Calu3 (cell line): ENCODE measurements at regions of chr18 and their contacts with region 1.

Region 1: GRCh38 chr18:63949068-63949737 is at the start of gene HMSD:
- DNase-seq: peak; percentile 91
- H3K4me3 Mint-ChIP-seq: peak within 1 kb of the TSS; percentile 100
- H3K27ac Mint-ChIP-seq: peak within 1 kb of the TSS; percentile 95
- H3K4me1 Mint-ChIP-seq: peaks cover 24% of the 10 kb centered on the region
- H3K27me3 Mint-ChIP-seq: no peaks in the 10 kb centered on the region
- CTCF ChIP-seq: peak; percentile 55
- total RNA-seq, gene HMSD: 7.8 and 11.9 TPM in 2 replicates

Region 2: DNA sequence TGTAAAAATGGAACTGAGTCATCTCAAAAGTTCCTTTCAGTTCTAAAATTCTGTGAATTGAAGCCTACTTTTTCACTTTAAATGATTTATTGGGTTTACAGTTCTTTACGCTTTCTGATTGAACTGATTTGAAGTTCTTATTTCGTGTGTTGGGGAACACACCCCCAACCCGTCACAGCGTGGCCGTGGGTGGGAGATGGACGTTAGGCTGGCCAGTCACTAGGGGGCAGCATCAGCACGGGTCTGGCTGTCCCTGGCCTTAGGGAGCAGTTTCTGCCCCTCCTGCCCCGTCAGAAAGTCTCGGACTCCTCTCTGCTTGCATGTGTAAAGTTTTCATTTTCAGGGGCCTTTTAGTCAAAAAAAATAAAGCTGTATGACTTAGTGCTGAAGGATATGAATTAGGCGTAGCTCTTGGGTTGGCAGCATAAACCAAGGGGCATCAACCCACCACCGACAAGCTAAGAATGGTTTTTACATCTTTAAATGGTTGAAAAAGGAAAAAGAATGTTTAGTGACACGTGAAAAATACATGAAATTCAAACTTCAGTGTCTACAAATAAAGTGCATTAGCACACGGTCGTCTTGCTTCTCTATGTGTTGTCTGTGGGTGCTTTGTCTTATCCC is 1362.9 kb before region 1 on chr18:
- CTCF ChIA-PET with region 1: no interaction called
- intact Hi-C with region 1: no loop called
- DNase-seq: peak; percentile 80
- H3K4me3 Mint-ChIP-seq: no peak overlapping the region
- H3K27ac Mint-ChIP-seq: no peak overlapping the region
- H3K4me1 Mint-ChIP-seq: peaks cover 20% of the 10 kb centered on the region
- H3K27me3 Mint-ChIP-seq: no peaks in the 10 kb centered on the region
- CTCF ChIP-seq: peak; percentile 92

Region 3: GRCh38 chr18:63882333-63883141 is 66.7 kb before region 1 on chr18:
- CTCF ChIA-PET with region 1: no interaction called
- intact Hi-C with region 1: loop called (anchors 2 kb)
- DNase-seq: peak; percentile 88
- H3K4me3 Mint-ChIP-seq: peak overlapping the region; percentile 41
- H3K27ac Mint-ChIP-seq: peak overlapping the region; percentile 97
- H3K4me1 Mint-ChIP-seq: peaks cover 65% of the 10 kb centered on the region
- H3K27me3 Mint-ChIP-seq: no peaks in the 10 kb centered on the region
- CTCF ChIP-seq: no peak

Region 4: DNA sequence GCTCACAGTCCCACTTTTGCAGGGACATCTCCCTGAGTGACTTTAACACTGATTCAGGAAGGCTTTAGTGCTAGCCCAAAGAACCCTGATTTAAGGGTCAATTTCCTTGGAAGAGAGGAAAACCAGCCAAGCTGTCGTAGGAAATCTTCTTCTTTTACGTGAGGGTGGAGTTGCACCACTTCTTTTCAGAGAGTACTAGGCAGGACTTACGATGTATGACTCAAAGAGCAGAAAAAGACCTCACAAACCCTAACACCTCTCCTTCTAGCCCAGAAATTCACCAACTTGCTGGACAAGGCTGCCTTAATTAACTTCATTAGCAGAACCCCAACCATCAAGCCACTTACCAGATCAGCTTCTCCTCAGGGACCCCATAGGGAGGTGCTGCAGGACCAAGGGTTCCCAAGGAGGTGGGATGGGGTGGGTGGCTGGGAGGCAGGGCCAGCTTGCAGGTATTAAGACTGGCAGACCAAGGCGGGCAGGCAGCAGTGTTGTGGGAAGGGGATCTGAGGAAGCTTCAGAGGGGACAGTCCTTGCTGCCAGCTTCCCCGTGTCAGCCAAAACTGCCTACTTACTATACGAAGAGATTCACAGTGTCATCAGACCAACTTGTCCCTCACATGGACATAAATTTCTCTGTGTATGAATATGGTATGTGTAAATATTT is 55.0 kb before region 1 on chr18:
- CTCF ChIA-PET with region 1: no interaction called
- intact Hi-C with region 1: no loop called
- DNase-seq: no peak
- H3K4me3 Mint-ChIP-seq: no peak overlapping the region
- H3K27ac Mint-ChIP-seq: peak overlapping the region; percentile 55
- H3K4me1 Mint-ChIP-seq: peaks cover 9% of the 10 kb centered on the region
- H3K27me3 Mint-ChIP-seq: no peaks in the 10 kb centered on the region
- CTCF ChIP-seq: no peak

Region 5: DNA sequence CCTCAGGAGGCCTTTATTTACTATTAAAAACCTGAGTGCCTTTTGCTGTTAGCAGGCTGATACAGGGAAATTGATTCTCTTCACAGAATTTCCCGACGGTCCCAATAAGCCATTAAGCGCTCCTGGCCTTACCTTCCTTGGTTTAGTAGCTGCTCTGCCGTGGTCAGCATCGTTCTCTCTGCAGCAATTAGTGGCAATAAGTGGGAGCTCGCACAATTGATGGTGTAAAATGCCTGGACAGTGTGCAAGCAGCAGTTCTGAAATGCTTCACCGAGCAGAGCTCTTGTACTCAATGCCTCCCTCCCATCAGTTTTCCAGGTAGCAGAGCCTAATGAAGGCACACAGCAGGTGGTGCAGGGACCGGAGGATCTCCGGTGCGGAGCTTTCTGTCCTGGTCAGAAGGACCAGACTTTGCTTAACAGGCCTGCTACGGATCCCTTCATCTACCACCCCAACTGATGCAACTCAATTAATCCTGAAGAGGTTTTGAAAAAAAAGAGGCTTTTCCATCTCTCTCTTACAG is 200.8 kb after region 1 on chr18:
- CTCF ChIA-PET with region 1: no interaction called
- intact Hi-C with region 1: no loop called
- DNase-seq: no peak
- H3K4me3 Mint-ChIP-seq: no peak overlapping the region
- H3K27ac Mint-ChIP-seq: no peak overlapping the region
- H3K4me1 Mint-ChIP-seq: peaks cover 7% of the 10 kb centered on the region
- H3K27me3 Mint-ChIP-seq: no peaks in the 10 kb centered on the region
- CTCF ChIP-seq: no peak

Region 6: DNA sequence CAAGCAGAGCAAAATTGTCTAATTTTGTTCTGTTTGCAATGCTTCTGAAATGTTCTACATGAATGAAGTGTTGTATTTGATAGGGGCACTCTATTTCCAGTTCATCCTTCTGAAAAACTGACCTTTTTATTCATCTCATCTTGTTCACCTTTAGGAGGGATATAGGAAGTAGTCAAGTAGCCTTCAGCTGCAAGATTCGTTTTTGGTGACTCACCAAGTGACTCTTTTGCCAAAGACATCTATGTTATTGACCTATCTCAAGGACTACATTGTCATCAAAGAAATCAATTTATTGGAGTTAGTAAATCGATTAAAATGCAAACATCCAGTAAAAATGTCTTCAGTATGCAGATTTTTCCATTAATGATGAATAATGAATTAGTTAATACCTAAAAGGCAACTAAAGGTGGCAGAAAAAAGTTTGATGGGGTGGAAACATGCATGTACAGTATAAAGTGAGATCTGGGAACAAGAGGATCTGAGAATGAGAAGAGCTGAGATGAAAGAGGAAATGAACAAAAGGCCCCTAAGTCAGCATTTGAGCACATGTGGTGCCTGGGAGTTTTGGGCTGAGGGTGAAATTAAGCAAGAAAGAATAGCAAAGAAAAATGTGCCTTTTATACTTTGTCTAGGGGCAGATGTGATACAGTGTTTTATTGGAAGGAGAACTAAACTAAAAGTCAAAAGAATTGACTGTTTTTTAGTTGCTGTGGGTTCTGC is 454.7 kb after region 1 on chr18:
- CTCF ChIA-PET with region 1: no interaction called
- intact Hi-C with region 1: no loop called
- DNase-seq: no peak
- H3K4me3 Mint-ChIP-seq: no peak overlapping the region
- H3K27ac Mint-ChIP-seq: no peak overlapping the region
- H3K4me1 Mint-ChIP-seq: no peaks in the 10 kb centered on the region
- H3K27me3 Mint-ChIP-seq: no peaks in the 10 kb centered on the region
- CTCF ChIP-seq: no peak